CD8-positive, alpha-beta T cell (primary cell): ENCODE measurements at regions of chr14 and their contacts with region 1.

Region 1: DNA sequence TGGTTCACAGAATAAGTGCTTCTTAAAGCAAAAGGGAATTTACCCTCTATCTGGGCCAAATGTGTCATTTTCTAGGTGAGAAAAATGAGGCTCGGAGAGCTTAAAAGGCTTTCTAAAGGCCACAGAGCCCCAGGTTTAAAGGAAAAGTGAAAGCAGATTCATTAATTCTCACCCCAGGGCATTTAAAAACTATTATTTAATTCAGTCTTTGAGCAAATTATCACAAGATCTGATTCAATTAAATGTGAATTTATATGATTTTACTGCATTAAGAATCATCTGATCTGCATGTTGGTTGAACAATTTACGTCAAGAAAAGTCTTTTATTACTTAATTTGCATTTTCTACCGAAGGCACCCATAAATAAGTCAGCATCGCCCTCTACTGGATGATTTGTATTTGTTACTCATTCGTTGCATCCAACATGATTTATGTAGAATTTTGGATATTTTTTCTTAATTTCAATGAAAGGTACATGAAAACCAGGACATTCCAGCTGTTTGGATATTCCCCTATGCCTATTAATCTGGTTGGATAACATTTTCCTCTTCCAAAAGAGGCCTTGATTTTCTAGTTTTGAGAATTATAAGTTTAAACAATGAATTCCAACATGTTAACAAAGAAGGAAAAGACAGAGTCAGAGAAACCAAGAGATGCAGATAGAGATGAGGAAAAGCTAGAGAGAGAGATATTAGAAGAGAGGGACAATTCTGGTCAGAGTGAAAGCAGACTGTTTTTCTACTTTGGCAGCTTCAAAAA is 19.1 kb upstream of the DHRS7 start:
- DNase-seq: peak in 3 of 9 experiments; percentile 34 to 87 (median 81)
- ATAC-seq: peak; percentile 85
- H3K4me3 ChIP-seq: peak overlapping the region; percentile 37 to 44
- H3K4me3 Mint-ChIP-seq: peak overlapping the region; percentile 74
- H3K27ac ChIP-seq: peak overlapping the region; percentile 50 to 88
- H3K27ac Mint-ChIP-seq: peak overlapping the region; percentile 86
- H3K4me1 ChIP-seq: peaks cover 4% of the 10 kb centered on the region
- H3K4me1 Mint-ChIP-seq: peaks cover 10% of the 10 kb centered on the region
- H3K27me3 ChIP-seq: no peaks in the 10 kb centered on the region
- H3K27me3 Mint-ChIP-seq: no peaks in the 10 kb centered on the region
- CTCF ChIP-seq: peak; percentile 90

Region 2: GRCh38 chr14:59028476-59029202 is 1155.7 kb before region 1 on chr14:
- CTCF ChIA-PET with region 1: no interaction called
- POLR2A ChIA-PET with region 1: no interaction called
- intact Hi-C with region 1: loop called in 1 of 2 experiments (anchors 10 kb)
- DNase-seq: peak in 3 of 9 experiments; percentile 3 to 23 (median 17)
- ATAC-seq: no peak
- H3K4me3 ChIP-seq: no peak overlapping the region
- H3K4me3 Mint-ChIP-seq: no peak overlapping the region
- H3K27ac ChIP-seq: no peak overlapping the region
- H3K27ac Mint-ChIP-seq: no peak overlapping the region
- H3K4me1 ChIP-seq: no peaks in the 10 kb centered on the region
- H3K4me1 Mint-ChIP-seq: peaks cover 6% of the 10 kb centered on the region
- H3K27me3 ChIP-seq: no peaks in the 10 kb centered on the region
- H3K27me3 Mint-ChIP-seq: peaks cover 20% of the 10 kb centered on the region
- CTCF ChIP-seq: peak; percentile 25

Region 3: DNA sequence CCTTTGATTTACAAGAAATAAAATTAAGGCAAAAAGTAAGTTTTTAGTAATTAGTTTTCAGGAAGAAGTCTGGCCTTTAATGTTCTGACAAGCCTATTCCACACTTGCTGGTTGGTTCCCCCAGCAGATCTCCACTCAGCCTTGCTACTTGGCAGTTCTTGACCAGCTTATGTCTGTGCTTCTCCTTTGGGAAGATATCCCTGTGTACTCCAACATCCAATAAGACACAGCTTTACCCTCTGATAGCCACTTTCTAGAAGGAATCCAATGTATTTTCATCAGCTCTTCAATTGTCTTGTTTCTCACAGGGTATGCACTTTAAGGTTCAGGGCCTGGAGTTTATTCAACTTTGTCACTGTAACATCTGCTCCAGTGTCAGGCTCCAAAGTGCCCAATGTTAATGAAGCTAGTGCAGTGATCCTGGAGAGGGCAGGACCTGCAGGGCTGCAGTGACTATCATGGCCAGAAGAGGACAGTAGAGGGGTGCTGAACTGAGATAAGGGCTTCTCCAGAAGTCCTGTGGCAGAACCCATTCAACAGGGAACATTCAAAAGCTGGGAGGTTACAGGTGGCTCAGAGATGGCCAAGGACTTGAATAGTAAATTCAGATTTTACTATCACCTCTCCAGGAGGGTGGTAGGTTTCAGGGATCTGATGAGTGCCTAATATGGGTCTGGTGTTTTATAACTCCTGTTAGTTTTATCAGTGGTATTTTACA is 677.1 kb before region 1 on chr14:
- CTCF ChIA-PET with region 1: interaction called, 4 read pairs
- POLR2A ChIA-PET with region 1: no interaction called
- intact Hi-C with region 1: loop called (anchors 2 kb)
- DNase-seq: peak; percentile 1 to 56 (median 44)
- ATAC-seq: peak; percentile 88
- H3K4me3 ChIP-seq: no peak overlapping the region
- H3K4me3 Mint-ChIP-seq: no peak overlapping the region
- H3K27ac ChIP-seq: no peak overlapping the region
- H3K27ac Mint-ChIP-seq: no peak overlapping the region
- H3K4me1 ChIP-seq: peaks cover 4% of the 10 kb centered on the region
- H3K4me1 Mint-ChIP-seq: peaks cover 10% of the 10 kb centered on the region
- H3K27me3 ChIP-seq: no peaks in the 10 kb centered on the region
- H3K27me3 Mint-ChIP-seq: peaks cover 9% of the 10 kb centered on the region
- CTCF ChIP-seq: peak; percentile 76

Region 4: DNA sequence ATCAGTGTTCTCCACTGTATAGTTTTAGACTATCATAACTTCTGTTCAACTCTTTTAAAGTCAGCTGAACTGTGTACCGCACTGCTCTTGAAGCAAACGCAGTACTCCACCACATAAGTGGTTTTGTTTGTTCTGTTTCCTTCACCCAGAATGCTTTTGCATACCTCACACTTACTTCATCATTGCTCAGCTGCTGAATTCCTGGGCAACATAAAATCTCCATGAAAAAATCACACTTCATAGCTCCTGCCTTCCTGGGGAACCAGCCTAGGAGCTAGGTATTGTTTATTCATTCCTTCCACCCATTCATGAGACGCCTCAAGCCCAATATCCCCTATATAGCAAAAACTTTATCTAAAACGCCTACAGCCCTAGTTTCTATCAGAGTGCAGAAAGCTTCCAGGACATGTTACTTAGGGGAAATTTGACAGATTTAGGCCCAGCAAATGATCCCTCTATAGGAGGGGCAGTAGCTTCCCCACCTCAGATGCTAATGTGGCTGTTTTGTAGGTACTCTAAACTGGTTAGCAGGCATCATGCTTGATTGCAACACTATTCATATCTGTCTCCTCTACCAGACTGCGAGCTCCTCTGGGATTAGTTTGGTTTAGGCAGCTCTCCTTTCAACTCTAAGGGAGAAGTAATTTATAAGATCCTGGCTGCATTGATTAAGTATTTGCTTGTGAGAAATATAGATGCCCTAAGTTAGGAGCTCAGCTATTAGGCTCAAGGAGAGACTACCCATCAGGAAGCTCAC is 219.9 kb before region 1 on chr14:
- CTCF ChIA-PET with region 1: interaction called, 167 read pairs
- POLR2A ChIA-PET with region 1: interaction called, 3 read pairs
- intact Hi-C with region 1: loop called (anchors 1 kb)
- DNase-seq: peak in 2 of 9 experiments; percentile 24 to 47
- ATAC-seq: peak; percentile 34
- H3K4me3 ChIP-seq: peak overlapping the region in 1 of 2 experiments; percentile 52
- H3K4me3 Mint-ChIP-seq: peak overlapping the region; percentile 88
- H3K27ac ChIP-seq: no peak overlapping the region
- H3K27ac Mint-ChIP-seq: peak overlapping the region; percentile 95
- H3K4me1 ChIP-seq: peaks cover 12% of the 10 kb centered on the region
- H3K4me1 Mint-ChIP-seq: peaks cover 18% of the 10 kb centered on the region
- H3K27me3 ChIP-seq: no peaks in the 10 kb centered on the region
- H3K27me3 Mint-ChIP-seq: no peaks in the 10 kb centered on the region
- CTCF ChIP-seq: no peak

Region 5: GRCh38 chr14:59986556-59987059 is 197.7 kb before region 1 on chr14:
- CTCF ChIA-PET with region 1: no interaction called
- POLR2A ChIA-PET with region 1: no interaction called
- intact Hi-C with region 1: no loop called
- DNase-seq: no peak
- ATAC-seq: no peak
- H3K4me3 ChIP-seq: no peak overlapping the region
- H3K4me3 Mint-ChIP-seq: no peak overlapping the region
- H3K27ac ChIP-seq: no peak overlapping the region
- H3K27ac Mint-ChIP-seq: no peak overlapping the region
- H3K4me1 ChIP-seq: no peaks in the 10 kb centered on the region
- H3K4me1 Mint-ChIP-seq: no peaks in the 10 kb centered on the region
- H3K27me3 ChIP-seq: no peaks in the 10 kb centered on the region
- H3K27me3 Mint-ChIP-seq: peaks cover 7% of the 10 kb centered on the region
- CTCF ChIP-seq: no peak

Region 6: DNA sequence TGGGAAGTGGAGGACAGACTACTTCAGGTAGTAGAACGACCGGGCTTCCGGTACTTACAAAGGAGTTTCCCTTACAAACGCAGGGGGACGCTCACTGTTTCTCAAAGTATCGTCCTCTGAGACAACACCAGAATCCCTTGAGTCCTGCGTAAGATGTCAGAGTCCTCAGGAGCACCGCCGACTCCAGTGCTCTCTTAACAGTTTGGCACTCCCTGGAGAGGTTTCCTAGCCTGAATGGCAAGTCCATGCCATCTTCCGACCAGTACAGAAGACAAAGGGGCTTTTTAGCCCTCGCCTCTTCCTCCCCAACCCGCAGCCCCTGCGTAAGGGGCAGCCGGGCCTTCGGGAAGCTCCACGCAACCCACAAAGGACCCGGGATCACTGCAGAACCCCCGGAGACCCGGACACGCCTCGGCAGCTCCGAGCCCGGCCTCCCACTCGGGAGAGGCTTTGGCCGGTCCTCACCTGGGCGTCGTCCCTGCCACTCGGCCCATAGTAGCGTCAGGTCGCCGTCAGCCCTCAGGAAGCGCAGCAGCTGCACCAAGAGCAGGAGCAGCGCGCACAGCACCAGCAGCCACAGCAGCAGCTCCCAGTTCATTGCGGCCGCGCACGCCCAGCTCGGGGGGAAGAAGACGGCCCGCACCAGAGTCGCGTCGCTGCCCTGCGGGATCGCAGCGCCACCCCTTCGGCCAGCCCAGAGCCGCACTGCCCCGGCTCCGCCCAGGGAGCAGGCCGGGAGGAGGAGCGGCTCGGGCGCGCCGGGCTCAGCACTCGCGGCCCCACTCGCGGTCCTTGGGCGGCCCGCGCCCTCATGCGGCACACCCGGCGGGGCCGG is 19.4 kb before region 1 on chr14 and contains the start of gene DHRS7:
- CTCF ChIA-PET with region 1: interaction called, 42 read pairs
- POLR2A ChIA-PET with region 1: interaction called, 27 read pairs
- intact Hi-C with region 1: loop called (anchors 1 to 2 kb)
- DNase-seq: peak; percentile 28 to 89 (median 62)
- ATAC-seq: peak; percentile 70
- H3K4me3 ChIP-seq: peak within 1 kb of the TSS; percentile 68 to 88
- H3K4me3 Mint-ChIP-seq: peak within 1 kb of the TSS; percentile 99
- H3K27ac ChIP-seq: peak within 1 kb of the TSS; percentile 82 to 95
- H3K27ac Mint-ChIP-seq: peak within 1 kb of the TSS; percentile 100
- H3K4me1 ChIP-seq: peaks cover 31% of the 10 kb centered on the region
- H3K4me1 Mint-ChIP-seq: peaks cover 52% of the 10 kb centered on the region
- H3K27me3 ChIP-seq: no peaks in the 10 kb centered on the region
- H3K27me3 Mint-ChIP-seq: no peaks in the 10 kb centered on the region
- CTCF ChIP-seq: no peak
- total RNA-seq, gene DHRS7: 26.6 to 27.6 TPM

Region 7: GRCh38 chr14:60220084-60220483 is 35.8 kb after region 1 on chr14:
- CTCF ChIA-PET with region 1: no interaction called
- POLR2A ChIA-PET with region 1: no interaction called
- intact Hi-C with region 1: no loop called
- DNase-seq: peak in 2 of 9 experiments; percentile 44 to 65
- ATAC-seq: peak; percentile 71
- H3K4me3 ChIP-seq: no peak overlapping the region
- H3K4me3 Mint-ChIP-seq: no peak overlapping the region
- H3K27ac ChIP-seq: no peak overlapping the region
- H3K27ac Mint-ChIP-seq: no peak overlapping the region
- H3K4me1 ChIP-seq: no peaks in the 10 kb centered on the region
- H3K4me1 Mint-ChIP-seq: no peaks in the 10 kb centered on the region
- H3K27me3 ChIP-seq: no peaks in the 10 kb centered on the region
- H3K27me3 Mint-ChIP-seq: no peaks in the 10 kb centered on the region
- CTCF ChIP-seq: no peak

Region 8: DNA sequence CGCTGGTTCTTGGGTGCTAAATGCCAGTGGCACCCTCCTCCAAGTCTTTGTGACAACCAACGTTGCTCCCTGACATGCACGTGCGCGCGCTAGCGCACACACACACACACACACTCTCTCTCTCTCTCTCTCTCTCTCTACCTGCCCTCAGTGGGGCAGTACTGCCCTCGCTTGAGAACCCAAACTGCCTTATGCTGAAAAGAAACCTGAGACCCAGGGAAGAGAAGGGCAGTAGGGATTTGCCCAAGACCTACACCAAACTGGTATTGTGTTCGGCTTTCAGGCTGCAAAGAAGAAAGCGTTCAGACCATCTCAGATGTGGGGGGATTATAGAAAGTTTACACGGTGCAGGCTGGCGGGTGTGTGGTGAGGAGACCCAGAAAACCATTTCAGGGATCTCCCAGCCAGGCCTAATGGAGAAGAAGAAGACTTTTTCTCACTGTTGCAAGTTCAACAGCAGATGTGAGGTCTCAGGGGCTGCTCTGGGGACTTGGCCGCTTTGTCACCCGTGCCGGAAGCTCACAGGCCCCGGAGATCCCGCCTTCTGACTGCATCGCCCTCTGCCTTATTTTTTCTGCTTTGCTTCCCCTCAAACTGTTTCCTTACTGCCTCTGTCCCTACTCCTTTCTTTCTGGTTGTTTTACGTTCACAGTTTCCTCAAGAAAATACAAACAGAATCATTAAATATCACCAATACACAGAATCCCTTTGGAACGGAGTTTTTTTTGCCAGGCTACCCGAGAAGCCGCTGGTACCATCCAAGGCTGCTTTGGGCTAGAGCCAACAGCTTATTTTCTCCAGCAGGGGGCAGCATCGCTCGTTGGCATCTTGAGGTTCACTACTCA is 147.1 kb after region 1 on chr14:
- CTCF ChIA-PET with region 1: interaction called, 4 read pairs
- POLR2A ChIA-PET with region 1: no interaction called
- intact Hi-C with region 1: loop called in 1 of 2 experiments (anchors 5 kb)
- DNase-seq: peak; percentile 51 to 86 (median 80)
- ATAC-seq: peak; percentile 80
- H3K4me3 ChIP-seq: peak overlapping the region; percentile 52 to 55
- H3K4me3 Mint-ChIP-seq: peak overlapping the region; percentile 98
- H3K27ac ChIP-seq: peak overlapping the region; percentile 36 to 47
- H3K27ac Mint-ChIP-seq: peak overlapping the region; percentile 94
- H3K4me1 ChIP-seq: peaks cover 9% of the 10 kb centered on the region
- H3K4me1 Mint-ChIP-seq: peaks cover 33% of the 10 kb centered on the region
- H3K27me3 ChIP-seq: no peaks in the 10 kb centered on the region
- H3K27me3 Mint-ChIP-seq: peaks cover 30% of the 10 kb centered on the region
- CTCF ChIP-seq: peak; percentile 87